GM10248 (cell line): ENCODE measurements at regions of chr19 and their contacts with region 1.

Region 1: DNA sequence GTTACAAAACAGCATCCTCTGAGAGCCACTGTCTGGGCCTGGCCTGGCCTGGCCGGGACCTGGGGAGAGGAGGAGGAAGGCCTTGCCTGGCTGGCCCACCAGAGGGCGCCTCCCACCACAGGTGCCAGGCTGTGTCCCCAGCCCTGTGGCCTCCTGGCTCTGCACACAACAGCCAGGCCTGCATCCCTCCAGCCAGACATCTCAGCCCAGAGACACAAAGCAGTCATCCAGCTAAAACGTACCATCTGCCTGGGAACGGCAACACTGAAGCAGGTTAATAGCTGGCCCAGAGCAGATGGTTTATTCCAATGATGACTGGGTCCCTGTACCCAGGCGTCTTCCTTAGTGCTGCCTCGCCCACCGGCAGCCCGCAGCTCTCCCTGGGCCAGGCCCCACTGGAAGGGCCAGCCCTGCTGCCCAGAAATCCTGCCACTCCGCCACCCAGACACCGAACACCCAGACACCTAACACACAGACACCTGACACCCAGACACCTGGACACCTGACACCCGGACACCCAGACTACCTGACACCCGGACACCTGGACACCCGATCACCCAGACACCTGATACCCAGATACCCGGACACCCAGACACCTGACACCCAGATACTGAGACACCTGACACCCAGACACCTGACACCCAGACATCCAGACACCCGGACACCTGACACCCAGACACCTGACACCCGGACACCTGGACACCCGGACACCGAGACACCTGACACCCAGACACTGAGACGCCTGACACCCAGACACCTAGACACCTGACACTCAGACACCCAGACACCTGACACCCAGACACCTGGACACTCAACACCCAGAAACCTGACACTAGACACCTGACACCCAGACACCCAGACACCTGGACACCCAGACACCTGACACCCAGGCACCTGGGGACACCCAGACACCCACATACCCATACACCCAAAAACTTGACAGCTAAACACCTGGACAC is 20.1 kb downstream of the C19orf12 start:
- DNase-seq: peak; percentile 83
- CTCF ChIP-seq: peak; percentile 93

Region 2: GRCh38 chr19:29665215-29665825 is 29.6 kb before region 1 on chr19 and contains the start of gene PLEKHF1:
- CTCF ChIA-PET with region 1: interaction called, 29 read pairs
- POLR2A ChIA-PET with region 1: no interaction called
- DNase-seq: peak; percentile 96
- CTCF ChIP-seq: peak; percentile 37

Region 3: GRCh38 chr19:29671393-29672160 is 23.4 kb before region 1 on chr19:
- CTCF ChIA-PET with region 1: interaction called, 49 read pairs
- POLR2A ChIA-PET with region 1: no interaction called
- DNase-seq: peak; percentile 76
- CTCF ChIP-seq: peak; percentile 26

Region 4: GRCh38 chr19:29680447-29680846 is 14.5 kb before region 1 on chr19:
- CTCF ChIA-PET with region 1: interaction called, 49 read pairs
- POLR2A ChIA-PET with region 1: no interaction called
- DNase-seq: peak; percentile 63
- CTCF ChIP-seq: no peak

Region 5: GRCh38 chr19:29811125-29812079 is 116.5 kb after region 1 on chr19 and contains the start of gene CCNE1:
- CTCF ChIA-PET with region 1: no interaction called
- POLR2A ChIA-PET with region 1: no interaction called
- DNase-seq: peak; percentile 97
- CTCF ChIP-seq: no peak